ENCODE measurements at regions of chr11 and their contacts with region 1.

Region 1: GRCh38 chr11:22304337-22304961 is 33.7 kb upstream of the SLC17A6 start:
- DNase-seq: no peak
- H3K4me3 Mint-ChIP-seq: no peak overlapping the region
- H3K27ac Mint-ChIP-seq: no peak overlapping the region
- H3K4me1 Mint-ChIP-seq: no peaks in the 10 kb centered on the region
- H3K27me3 Mint-ChIP-seq: peaks cover 5% of the 10 kb centered on the region

Region 2: DNA sequence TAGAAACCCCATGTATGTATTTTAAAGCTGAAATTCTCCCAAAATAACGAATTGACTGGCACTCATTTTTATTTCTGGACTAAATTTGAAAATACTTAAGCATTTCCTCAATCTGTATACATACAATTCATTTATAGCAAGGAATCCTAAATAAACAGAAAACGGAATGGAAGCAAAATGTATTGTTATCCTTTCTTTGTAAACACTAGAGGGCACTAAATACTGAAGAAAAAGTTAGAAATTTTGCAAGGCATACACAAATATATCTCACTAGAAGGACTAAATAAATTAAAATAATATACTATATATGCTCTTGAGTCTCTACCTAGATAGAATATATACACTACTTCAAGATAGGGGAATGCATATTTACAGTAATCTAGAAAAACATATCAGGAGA is 134.6 kb before region 1 on chr11:
- intact Hi-C with region 1: loop called (anchors 5 kb)
- DNase-seq: no peak
- H3K4me3 Mint-ChIP-seq: no peak overlapping the region
- H3K27ac Mint-ChIP-seq: no peak overlapping the region
- H3K4me1 Mint-ChIP-seq: no peaks in the 10 kb centered on the region
- H3K27me3 Mint-ChIP-seq: no peaks in the 10 kb centered on the region

Region 3: GRCh38 chr11:22244986-22245592 is 59.4 kb before region 1 on chr11:
- intact Hi-C with region 1: loop called (anchors 1 kb)
- DNase-seq: peak; percentile 0
- H3K4me3 Mint-ChIP-seq: no peak overlapping the region
- H3K27ac Mint-ChIP-seq: no peak overlapping the region
- H3K4me1 Mint-ChIP-seq: no peaks in the 10 kb centered on the region
- H3K27me3 Mint-ChIP-seq: peaks cover 4% of the 10 kb centered on the region

Region 4: GRCh38 chr11:22256876-22257275 is 47.6 kb before region 1 on chr11:
- intact Hi-C with region 1: no loop called
- DNase-seq: no peak
- H3K4me3 Mint-ChIP-seq: no peak overlapping the region
- H3K27ac Mint-ChIP-seq: no peak overlapping the region
- H3K4me1 Mint-ChIP-seq: no peaks in the 10 kb centered on the region
- H3K27me3 Mint-ChIP-seq: no peaks in the 10 kb centered on the region

Measured in activated T-helper 1 cell treated with anti-CD3 and anti-CD28 coated beads, Interleukin-12 subunit alpha, Interleukin-12 subunit beta, Interleukin-2, Interleukin-4 antibody, amounts not matched to agents 30 ng/mL and 10 ng/mL and 1 ng/mL, durations not matched to agents 14 hours and 24 hours and 36 hours (primary cell).